ENCODE measurements at regions of chr12 and their contacts with region 1.

Region 1: GRCh38 chr12:120317224-120318105 is 10.1 kb downstream of the PLA2G1B start:
- DNase-seq: peak; percentile 100
- ATAC-seq: peak; percentile 100
- H3K4me3 Mint-ChIP-seq: peak overlapping the region; percentile 92
- H3K27ac Mint-ChIP-seq: peak overlapping the region; percentile 94
- H3K4me1 Mint-ChIP-seq: peaks cover 12% of the 10 kb centered on the region
- H3K27me3 Mint-ChIP-seq: no peaks in the 10 kb centered on the region

Region 2: GRCh38 chr12:120265473-120266179 is 51.8 kb before region 1 on chr12 and contains the start of gene PXN:
- CTCF ChIA-PET with region 1: no interaction called
- POLR2A ChIA-PET with region 1: no interaction called
- intact Hi-C with region 1: loop called in 1 of 2 experiments (anchors 1 kb)
- DNase-seq: peak; percentile 95
- ATAC-seq: peak; percentile 79
- H3K4me3 Mint-ChIP-seq: peak within 1 kb of the TSS; percentile 95
- H3K27ac Mint-ChIP-seq: peak within 1 kb of the TSS; percentile 85
- H3K4me1 Mint-ChIP-seq: peaks cover 46% of the 10 kb centered on the region
- H3K27me3 Mint-ChIP-seq: no peaks in the 10 kb centered on the region
- total RNA-seq, gene PXN: 74.5 to 104 TPM

Region 3: GRCh38 chr12:120346681-120347080 is 29.2 kb after region 1 on chr12:
- CTCF ChIA-PET with region 1: no interaction called
- POLR2A ChIA-PET with region 1: no interaction called
- intact Hi-C with region 1: no loop called
- DNase-seq: no peak
- ATAC-seq: no peak
- H3K4me3 Mint-ChIP-seq: no peak overlapping the region
- H3K27ac Mint-ChIP-seq: no peak overlapping the region
- H3K4me1 Mint-ChIP-seq: no peaks in the 10 kb centered on the region
- H3K27me3 Mint-ChIP-seq: no peaks in the 10 kb centered on the region

Region 4: GRCh38 chr12:120469450-120470149 is 152.1 kb after region 1 on chr12 and contains the start of gene SRSF9:
- CTCF ChIA-PET with region 1: interaction called, 4 read pairs
- POLR2A ChIA-PET with region 1: no interaction called
- intact Hi-C with region 1: loop called in 1 of 2 experiments (anchors 1 kb)
- DNase-seq: peak; percentile 98
- ATAC-seq: peak; percentile 94
- H3K4me3 Mint-ChIP-seq: peak within 1 kb of the TSS; percentile 79
- H3K27ac Mint-ChIP-seq: peak within 1 kb of the TSS; percentile 88
- H3K4me1 Mint-ChIP-seq: peaks cover 40% of the 10 kb centered on the region
- H3K27me3 Mint-ChIP-seq: no peaks in the 10 kb centered on the region
- total RNA-seq, gene SRSF9: 140 to 209 TPM

Region 5: DNA sequence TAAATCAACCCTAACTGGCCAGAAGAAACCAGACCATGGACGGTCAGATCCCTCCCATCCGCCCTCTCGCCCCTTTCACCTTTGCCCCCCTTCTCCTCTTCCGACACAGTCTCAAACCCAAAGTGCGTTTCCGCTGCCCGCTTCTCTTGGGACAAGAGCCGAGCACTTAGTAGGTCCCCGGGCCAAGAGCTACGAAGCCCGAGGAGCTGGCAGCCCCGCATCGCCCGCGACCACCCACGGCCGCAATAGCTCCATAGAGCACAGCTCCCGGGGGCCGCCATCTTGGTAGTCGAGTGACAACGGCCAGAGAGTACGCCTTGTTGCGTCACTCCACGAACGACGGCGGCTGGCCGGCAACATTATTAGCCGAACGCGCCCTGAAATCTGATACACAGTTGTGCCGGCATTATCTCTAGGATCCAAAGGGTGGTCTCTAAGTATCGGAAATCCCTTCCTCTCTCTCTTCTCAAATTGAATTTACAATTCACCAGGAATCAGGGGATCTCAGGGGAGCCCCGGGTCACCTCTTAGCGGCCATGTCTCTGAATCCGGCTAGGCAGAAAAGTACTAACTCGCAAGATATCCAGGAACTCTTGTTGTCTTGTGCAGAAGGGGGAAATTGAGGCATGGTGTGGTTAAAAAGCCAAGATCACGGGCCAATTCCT is 211.5 kb after region 1 on chr12 and contains the start of gene COQ5:
- CTCF ChIA-PET with region 1: no interaction called
- POLR2A ChIA-PET with region 1: no interaction called
- intact Hi-C with region 1: loop called in 1 of 2 experiments (anchors 1 kb)
- DNase-seq: peak; percentile 93
- ATAC-seq: peak; percentile 93
- H3K4me3 Mint-ChIP-seq: peak within 1 kb of the TSS; percentile 99
- H3K27ac Mint-ChIP-seq: peak within 1 kb of the TSS; percentile 100
- H3K4me1 Mint-ChIP-seq: peaks cover 21% of the 10 kb centered on the region
- H3K27me3 Mint-ChIP-seq: no peaks in the 10 kb centered on the region
- total RNA-seq, gene COQ5: 31.3 to 32.6 TPM

Region 6: GRCh38 chr12:120546050-120546386 is 228.6 kb after region 1 on chr12:
- CTCF ChIA-PET with region 1: no interaction called
- POLR2A ChIA-PET with region 1: no interaction called
- intact Hi-C with region 1: no loop called
- DNase-seq: no peak
- ATAC-seq: no peak
- H3K4me3 Mint-ChIP-seq: no peak overlapping the region
- H3K27ac Mint-ChIP-seq: no peak overlapping the region
- H3K4me1 Mint-ChIP-seq: peaks cover 11% of the 10 kb centered on the region
- H3K27me3 Mint-ChIP-seq: no peaks in the 10 kb centered on the region

Region 7: GRCh38 chr12:121096199-121096798 is 778.8 kb after region 1 on chr12:
- CTCF ChIA-PET with region 1: no interaction called
- POLR2A ChIA-PET with region 1: no interaction called
- intact Hi-C with region 1: no loop called
- DNase-seq: no peak
- ATAC-seq: no peak
- H3K4me3 Mint-ChIP-seq: peak overlapping the region; percentile 65
- H3K27ac Mint-ChIP-seq: no peak overlapping the region
- H3K4me1 Mint-ChIP-seq: peaks cover 38% of the 10 kb centered on the region
- H3K27me3 Mint-ChIP-seq: peaks cover 5% of the 10 kb centered on the region